HepG2 (cell line): ENCODE measurements at regions of chr1 and their contacts with region 1.

Region 1: DNA sequence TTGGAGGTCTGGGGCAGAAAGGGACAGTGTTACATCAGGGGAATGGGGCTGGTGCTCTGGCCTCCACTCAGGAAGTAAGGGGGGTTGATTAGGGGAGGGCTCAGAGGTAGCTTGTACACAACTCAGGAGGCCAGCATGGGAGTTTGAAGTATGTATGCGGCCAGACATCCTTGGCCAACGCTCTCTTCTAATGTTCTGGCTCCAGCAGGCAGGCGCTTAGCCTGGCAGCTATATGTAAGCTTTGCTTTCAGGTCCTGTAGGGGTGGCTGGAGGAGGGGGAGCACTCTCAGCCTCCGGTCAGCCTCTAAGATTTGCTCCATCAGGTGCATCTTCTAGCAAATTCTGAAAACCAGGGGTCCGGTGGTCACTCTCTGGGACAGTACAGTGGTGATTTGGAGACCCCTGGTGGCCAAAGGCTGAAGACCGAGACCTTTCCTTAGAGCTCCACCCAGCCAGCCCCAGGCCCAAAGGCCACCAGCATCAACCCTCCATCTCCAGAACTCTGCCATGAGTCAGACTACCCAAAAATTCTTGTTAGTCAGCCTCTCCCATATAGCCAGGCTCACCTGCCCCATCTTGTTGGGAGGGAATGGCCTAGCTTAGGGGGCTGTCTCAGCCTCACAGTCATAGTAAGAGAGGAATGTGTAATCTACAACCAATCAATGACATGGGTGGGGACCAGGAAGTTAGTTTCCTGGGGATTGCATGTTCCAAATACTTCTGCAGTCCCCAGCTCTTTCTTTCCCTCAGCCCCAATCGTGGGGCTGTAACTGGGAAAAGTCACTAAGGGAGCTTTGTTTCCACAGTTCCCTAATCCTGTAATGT is 9.7 kb upstream of the COL8A2 start:
- DNase-seq: peak; percentile 52
- ATAC-seq: peak; percentile 95
- H3K4me3 ChIP-seq: no peak overlapping the region
- H3K27ac ChIP-seq: no peak overlapping the region
- H3K4me1 ChIP-seq: peaks cover 18% of the 10 kb centered on the region
- H3K27me3 ChIP-seq: no peaks in the 10 kb centered on the region
- CTCF ChIP-seq: peak; percentile 89
- EP300 ChIP-seq: no peak
- POLR2A ChIP-seq: no peak
- RAD21 ChIP-seq: peak; percentile 93

Region 2: DNA sequence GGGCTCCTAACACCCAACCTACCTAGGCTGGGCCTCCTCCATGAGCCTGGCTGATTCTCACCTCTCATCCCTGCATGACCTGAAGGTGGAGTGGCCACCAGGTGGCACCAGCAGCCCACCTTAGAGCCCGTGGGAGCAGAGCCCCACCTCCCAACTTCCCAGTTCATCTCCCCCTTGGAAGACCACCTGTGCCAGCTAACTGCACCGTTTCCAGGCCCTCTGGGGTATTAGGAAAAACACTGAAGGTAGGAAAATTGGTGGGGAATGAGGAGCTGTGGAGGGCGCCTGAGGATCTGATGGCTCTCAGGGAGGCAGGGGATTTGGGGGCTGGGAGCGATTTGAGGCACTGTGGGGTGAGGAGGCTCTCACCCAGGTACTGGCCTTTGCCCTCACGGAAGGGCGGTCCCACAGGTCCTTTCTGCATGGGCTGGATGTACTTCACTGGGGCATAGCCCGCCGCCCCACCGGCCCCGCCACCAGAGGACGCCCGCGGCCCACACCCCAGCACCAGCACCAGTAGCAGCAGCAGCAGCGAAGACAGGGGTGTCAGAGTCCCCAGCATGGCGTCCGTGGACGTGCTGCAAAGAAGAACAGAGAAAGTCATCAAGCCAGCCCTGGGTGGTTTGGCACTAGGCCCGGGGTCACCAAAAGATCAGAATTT is 34.9 kb before region 1 on chr1:
- CTCF ChIA-PET with region 1: interaction called, 104 read pairs
- POLR2A ChIA-PET with region 1: interaction called, 3 read pairs
- in situ Hi-C with region 1: loop called (anchors 5 kb)
- intact Hi-C with region 1: loop called (anchors 1 kb)
- DNase-seq: peak; percentile 73
- ATAC-seq: peak; percentile 86
- H3K4me3 ChIP-seq: peak overlapping the region in 2 of 3 experiments; percentile 42 to 60; a peak in 3 of 6 replicates
- H3K27ac ChIP-seq: no peak overlapping the region
- H3K4me1 ChIP-seq: peaks cover 29% of the 10 kb centered on the region; the same call in 1 of the 2 replicates
- H3K27me3 ChIP-seq: no peaks in the 10 kb centered on the region
- CTCF ChIP-seq: peak; percentile 86
- EP300 ChIP-seq: no peak
- POLR2A ChIP-seq: no peak
- RAD21 ChIP-seq: peak; percentile 93